ENCODE measurements at regions of chr1 and their contacts with region 1.

Region 1: GRCh38 chr1:212608209-212608955 is at the start of gene ATF3:
- DNase-seq: peak; percentile 97
- H3K4me3 Mint-ChIP-seq: peak within 1 kb of the TSS; percentile 91
- H3K27ac Mint-ChIP-seq: peak within 1 kb of the TSS; percentile 90
- H3K4me1 Mint-ChIP-seq: peaks cover 52% of the 10 kb centered on the region
- H3K27me3 Mint-ChIP-seq: peaks cover 36% of the 10 kb centered on the region
- total RNA-seq, gene ATF3: 49.7 to 51.5 TPM

Region 2: GRCh38 chr1:212525479-212526110 is 82.8 kb before region 1 on chr1:
- CTCF ChIA-PET with region 1: no interaction called
- POLR2A ChIA-PET with region 1: no interaction called
- intact Hi-C with region 1: no loop called
- DNase-seq: no peak
- H3K4me3 Mint-ChIP-seq: no peak overlapping the region
- H3K27ac Mint-ChIP-seq: no peak overlapping the region
- H3K4me1 Mint-ChIP-seq: no peaks in the 10 kb centered on the region
- H3K27me3 Mint-ChIP-seq: peaks cover 16% of the 10 kb centered on the region

Region 3: GRCh38 chr1:212558693-212559480 is 49.5 kb before region 1 on chr1:
- CTCF ChIA-PET with region 1: no interaction called
- POLR2A ChIA-PET with region 1: interaction called, 14 read pairs
- intact Hi-C with region 1: loop called (anchors 1 kb)
- DNase-seq: peak; percentile 93
- H3K4me3 Mint-ChIP-seq: peak overlapping the region; percentile 45
- H3K27ac Mint-ChIP-seq: peak overlapping the region; percentile 83
- H3K4me1 Mint-ChIP-seq: peaks cover 15% of the 10 kb centered on the region
- H3K27me3 Mint-ChIP-seq: peaks cover 7% of the 10 kb centered on the region

Region 4: GRCh38 chr1:212566522-212567479 is 41.6 kb before region 1 on chr1:
- CTCF ChIA-PET with region 1: interaction called, 3 read pairs
- POLR2A ChIA-PET with region 1: interaction called, 21 read pairs
- intact Hi-C with region 1: loop called (anchors 1 kb)
- DNase-seq: peak; percentile 79
- H3K4me3 Mint-ChIP-seq: peak overlapping the region; percentile 73
- H3K27ac Mint-ChIP-seq: peak overlapping the region; percentile 82
- H3K4me1 Mint-ChIP-seq: peaks cover 33% of the 10 kb centered on the region
- H3K27me3 Mint-ChIP-seq: peaks cover 2% of the 10 kb centered on the region

Region 5: GRCh38 chr1:212595787-212596714 is 12.3 kb before region 1 on chr1:
- CTCF ChIA-PET with region 1: interaction called, 8 read pairs
- POLR2A ChIA-PET with region 1: interaction called, 34 read pairs
- intact Hi-C with region 1: loop called (anchors 1 kb)
- DNase-seq: peak; percentile 59
- H3K4me3 Mint-ChIP-seq: peak overlapping the region; percentile 53
- H3K27ac Mint-ChIP-seq: peak overlapping the region; percentile 90
- H3K4me1 Mint-ChIP-seq: peaks cover 38% of the 10 kb centered on the region
- H3K27me3 Mint-ChIP-seq: peaks cover 15% of the 10 kb centered on the region

Region 6: DNA sequence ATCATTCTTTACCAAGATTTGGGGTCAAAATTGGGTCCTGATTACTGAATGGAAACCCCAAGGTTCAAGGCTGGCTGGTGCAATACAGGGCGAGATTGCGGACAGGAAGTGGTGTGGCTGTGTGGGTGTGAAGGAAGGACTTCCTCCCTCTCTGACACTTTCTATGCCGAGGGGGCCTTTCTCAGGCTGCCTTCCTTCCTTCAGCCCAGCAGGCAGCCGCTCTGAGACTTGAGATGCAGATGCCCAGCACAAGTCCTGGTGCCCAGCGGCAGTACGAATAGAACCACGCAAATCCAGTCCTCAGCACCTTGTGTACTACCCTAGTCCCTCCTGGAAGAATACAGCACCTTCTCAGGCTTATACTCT is 75.0 kb after region 1 on chr1:
- CTCF ChIA-PET with region 1: no interaction called
- POLR2A ChIA-PET with region 1: interaction called, 5 read pairs
- intact Hi-C with region 1: loop called (anchors 2 kb)
- DNase-seq: peak; percentile 90
- H3K4me3 Mint-ChIP-seq: peak overlapping the region; percentile 40
- H3K27ac Mint-ChIP-seq: peak overlapping the region; percentile 89
- H3K4me1 Mint-ChIP-seq: peaks cover 58% of the 10 kb centered on the region
- H3K27me3 Mint-ChIP-seq: peaks cover 2% of the 10 kb centered on the region

Region 7: GRCh38 chr1:212721388-212722247 is 113.2 kb after region 1 on chr1:
- CTCF ChIA-PET with region 1: no interaction called
- POLR2A ChIA-PET with region 1: interaction called, 3 read pairs
- intact Hi-C with region 1: loop called (anchors 5 kb)
- DNase-seq: peak; percentile 77
- H3K4me3 Mint-ChIP-seq: peak overlapping the region; percentile 63
- H3K27ac Mint-ChIP-seq: peak overlapping the region; percentile 94
- H3K4me1 Mint-ChIP-seq: peaks cover 58% of the 10 kb centered on the region
- H3K27me3 Mint-ChIP-seq: peaks cover 3% of the 10 kb centered on the region

Region 8: DNA sequence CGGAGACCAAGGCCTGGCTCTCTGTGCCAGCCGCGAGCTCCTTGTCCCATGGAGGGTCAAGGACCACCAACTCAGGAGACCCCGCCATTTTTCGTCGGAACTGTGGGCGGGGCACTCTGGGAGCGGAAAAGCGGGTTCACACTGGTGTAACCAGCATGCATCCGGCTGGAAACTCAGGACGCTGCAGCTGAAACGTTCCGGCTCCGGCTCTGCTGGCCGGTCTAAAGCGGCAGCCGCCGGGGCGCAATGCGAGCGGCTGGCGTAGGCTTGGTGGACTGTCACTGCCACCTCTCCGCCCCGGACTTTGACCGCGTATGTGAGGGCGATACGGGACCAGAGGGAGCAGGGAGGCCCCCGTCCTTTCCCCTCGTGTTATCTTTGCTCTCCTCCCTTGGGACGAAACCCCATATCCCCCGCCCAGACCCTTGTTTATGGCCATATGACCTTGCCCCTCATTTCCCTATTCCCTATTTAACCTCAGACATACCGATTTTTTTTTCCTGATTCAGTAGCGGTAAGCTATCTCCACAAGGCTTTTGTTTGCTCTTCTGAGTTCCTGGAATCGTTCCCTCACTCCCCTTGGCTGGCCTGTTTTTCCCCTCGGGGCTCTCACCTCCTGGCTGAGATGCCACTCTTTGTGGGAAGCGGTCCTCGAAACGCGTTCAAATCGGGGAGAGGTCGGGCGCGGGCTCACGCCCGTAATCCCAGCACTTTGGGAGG is 183.5 kb after region 1 on chr1 and contains the starts of genes NSL1 and TATDN3:
- CTCF ChIA-PET with region 1: no interaction called
- POLR2A ChIA-PET with region 1: interaction called, 4 read pairs
- intact Hi-C with region 1: loop called (anchors 2 kb)
- DNase-seq: peak; percentile 97
- H3K4me3 Mint-ChIP-seq: peak within 1 kb of the TSS; percentile 95
- H3K27ac Mint-ChIP-seq: peak within 1 kb of the TSS; percentile 82
- H3K4me1 Mint-ChIP-seq: peaks cover 32% of the 10 kb centered on the region
- H3K27me3 Mint-ChIP-seq: no peaks in the 10 kb centered on the region
- total RNA-seq, gene NSL1: 39.8 to 41.8 TPM
- total RNA-seq, gene TATDN3: 19.2 to 20.7 TPM

Measured in activated CD4-positive, alpha-beta memory T cell treated with anti-CD3 and anti-CD28 coated beads for 36 hours (primary cell).